MCF 10A (cell line): ENCODE measurements at regions of chr15 and their contacts with region 1.

Region 1: DNA sequence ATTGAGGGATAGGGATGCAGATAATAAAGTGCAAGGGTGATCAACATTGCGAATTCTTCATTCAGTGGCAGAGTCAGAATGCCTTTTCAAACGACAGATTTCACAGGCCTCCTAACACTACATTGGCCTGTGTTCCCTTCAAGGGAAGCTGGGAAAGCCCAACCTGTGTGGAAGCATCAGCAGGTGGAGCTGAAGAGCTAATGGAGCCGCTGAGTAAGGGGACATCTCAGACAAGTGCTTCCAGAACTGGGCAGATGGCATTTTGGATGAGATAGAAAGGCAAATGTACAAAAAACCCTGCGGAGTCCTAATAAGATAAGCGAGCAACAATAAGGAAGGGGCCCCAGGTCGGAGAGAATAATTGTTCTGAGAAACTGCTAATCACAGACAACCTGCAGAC is 8.5 kb upstream of the SLC24A5 start:
- DNase-seq: peak; percentile 46
- H3K4me3 Mint-ChIP-seq: no peak overlapping the region
- H3K27ac Mint-ChIP-seq: no peak overlapping the region
- H3K4me1 Mint-ChIP-seq: no peaks in the 10 kb centered on the region
- H3K27me3 Mint-ChIP-seq: peaks cover 24% of the 10 kb centered on the region
- CTCF ChIP-seq: peak; percentile 48

Region 2: GRCh38 chr15:48250640-48251076 is 138.4 kb after region 1 on chr15:
- CTCF ChIA-PET with region 1: interaction called, 49 read pairs
- POLR2A ChIA-PET with region 1: no interaction called
- intact Hi-C with region 1: loop called (anchors 1 kb)
- DNase-seq: peak; percentile 62
- H3K4me3 Mint-ChIP-seq: no peak overlapping the region
- H3K27ac Mint-ChIP-seq: peak overlapping the region; percentile 28
- H3K4me1 Mint-ChIP-seq: peaks cover 10% of the 10 kb centered on the region
- H3K27me3 Mint-ChIP-seq: no peaks in the 10 kb centered on the region
- CTCF ChIP-seq: peak; percentile 50

Region 3: GRCh38 chr15:48352474-48353072 is 240.3 kb after region 1 on chr15:
- CTCF ChIA-PET with region 1: interaction called, 3 read pairs
- POLR2A ChIA-PET with region 1: no interaction called
- intact Hi-C with region 1: loop called (anchors 1 kb)
- DNase-seq: peak; percentile 83
- H3K4me3 Mint-ChIP-seq: no peak overlapping the region
- H3K27ac Mint-ChIP-seq: no peak overlapping the region
- H3K4me1 Mint-ChIP-seq: peaks cover 11% of the 10 kb centered on the region
- H3K27me3 Mint-ChIP-seq: no peaks in the 10 kb centered on the region
- CTCF ChIP-seq: peak; percentile 73